ENCODE measurements at regions of chr3 and their contacts with region 1.

Region 1: DNA sequence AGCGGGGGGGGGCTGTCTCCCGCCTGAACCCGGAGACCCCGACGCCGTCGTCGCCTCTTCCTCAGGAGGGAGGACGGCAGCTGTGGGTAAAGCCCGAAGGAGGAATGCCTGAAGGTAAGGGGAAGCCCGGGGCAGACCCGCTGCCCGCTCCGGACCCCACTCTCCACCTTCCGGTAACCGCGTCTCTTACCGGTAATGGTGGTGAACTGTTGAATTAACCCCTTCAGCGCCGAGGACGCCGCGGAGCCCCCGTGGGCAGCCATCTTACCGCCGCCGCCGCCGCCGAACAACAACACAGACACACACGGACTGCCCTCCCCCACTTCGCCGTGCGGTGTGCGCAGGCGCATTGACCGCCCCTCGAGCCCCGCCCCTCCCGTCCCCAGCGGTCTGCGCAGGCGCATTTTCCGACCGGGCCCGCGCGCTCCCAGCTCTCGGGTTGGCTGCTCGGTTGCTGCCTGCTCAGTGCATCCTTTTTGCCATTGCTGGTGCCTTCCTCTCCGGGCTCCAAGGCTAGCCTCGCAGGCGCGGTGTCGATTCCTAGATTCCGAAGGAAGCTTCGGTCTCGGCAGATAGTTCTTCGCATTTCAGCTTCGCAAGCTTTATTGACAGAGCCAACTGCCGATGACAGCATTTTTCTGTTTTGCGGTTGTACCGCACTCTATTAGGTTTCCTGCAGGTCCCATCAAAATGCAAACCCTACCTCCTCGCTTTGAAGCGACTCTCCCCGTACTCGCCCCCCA is at the start of gene UBXN7:
- DNase-seq: peak; percentile 98
- H3K4me3 Mint-ChIP-seq: peak within 1 kb of the TSS; percentile 77
- H3K27ac Mint-ChIP-seq: peak within 1 kb of the TSS; percentile 93
- H3K4me1 Mint-ChIP-seq: peaks cover 20% of the 10 kb centered on the region
- H3K27me3 Mint-ChIP-seq: no peaks in the 10 kb centered on the region
- total RNA-seq, gene UBXN7: 55.9 to 60.5 TPM

Region 2: DNA sequence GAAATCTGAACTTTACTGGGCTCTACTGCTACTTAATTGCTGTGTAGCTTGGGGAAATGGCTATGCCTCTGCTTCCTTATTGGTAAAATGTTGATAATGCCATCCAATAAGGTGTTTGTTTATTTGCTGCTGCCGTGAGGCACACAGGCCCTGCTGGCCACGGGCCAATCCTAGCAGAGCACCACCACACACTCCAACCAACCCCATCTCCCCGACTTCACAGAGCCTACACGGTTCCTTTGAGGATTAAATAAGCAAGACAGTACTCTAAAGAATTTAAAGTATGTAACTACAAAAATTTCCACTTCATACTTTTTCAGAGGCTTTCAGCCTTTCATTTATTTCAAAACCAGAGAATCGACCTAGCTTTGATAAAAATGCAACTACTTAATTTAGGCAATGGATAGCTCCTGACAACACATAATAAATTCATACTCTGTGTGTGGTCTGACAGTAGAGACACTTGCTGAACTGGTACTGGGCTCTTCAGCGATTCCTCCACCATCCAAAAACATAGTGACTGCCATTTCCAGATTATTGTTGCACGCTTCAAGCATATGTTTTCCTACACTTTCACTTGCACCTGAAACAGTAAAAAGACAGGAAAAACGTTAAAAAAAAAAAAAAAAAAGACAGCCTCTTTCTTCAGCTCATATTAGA is 25.4 kb before region 1 on chr3:
- CTCF ChIA-PET with region 1: no interaction called
- POLR2A ChIA-PET with region 1: no interaction called
- DNase-seq: no peak
- H3K4me3 Mint-ChIP-seq: no peak overlapping the region
- H3K27ac Mint-ChIP-seq: no peak overlapping the region
- H3K4me1 Mint-ChIP-seq: peaks cover 2% of the 10 kb centered on the region
- H3K27me3 Mint-ChIP-seq: no peaks in the 10 kb centered on the region

Region 3: GRCh38 chr3:196502775-196503195 is 70.5 kb after region 1 on chr3:
- CTCF ChIA-PET with region 1: no interaction called
- POLR2A ChIA-PET with region 1: interaction called, 17 read pairs
- DNase-seq: peak; percentile 78
- H3K4me3 Mint-ChIP-seq: peak overlapping the region; percentile 100
- H3K27ac Mint-ChIP-seq: peak overlapping the region; percentile 99
- H3K4me1 Mint-ChIP-seq: peaks cover 37% of the 10 kb centered on the region
- H3K27me3 Mint-ChIP-seq: peaks cover 3% of the 10 kb centered on the region

Measured in activated CD4-positive, alpha-beta memory T cell treated with anti-CD3 and anti-CD28 coated beads, Interleukin-2, amount 10 ng/mL, durations not matched to agents 7 days and 5 days (primary cell).